Vagina (tissue), 2 donors: ENCODE measurements at regions of chr21 and their contacts with region 1.

Region 1: DNA sequence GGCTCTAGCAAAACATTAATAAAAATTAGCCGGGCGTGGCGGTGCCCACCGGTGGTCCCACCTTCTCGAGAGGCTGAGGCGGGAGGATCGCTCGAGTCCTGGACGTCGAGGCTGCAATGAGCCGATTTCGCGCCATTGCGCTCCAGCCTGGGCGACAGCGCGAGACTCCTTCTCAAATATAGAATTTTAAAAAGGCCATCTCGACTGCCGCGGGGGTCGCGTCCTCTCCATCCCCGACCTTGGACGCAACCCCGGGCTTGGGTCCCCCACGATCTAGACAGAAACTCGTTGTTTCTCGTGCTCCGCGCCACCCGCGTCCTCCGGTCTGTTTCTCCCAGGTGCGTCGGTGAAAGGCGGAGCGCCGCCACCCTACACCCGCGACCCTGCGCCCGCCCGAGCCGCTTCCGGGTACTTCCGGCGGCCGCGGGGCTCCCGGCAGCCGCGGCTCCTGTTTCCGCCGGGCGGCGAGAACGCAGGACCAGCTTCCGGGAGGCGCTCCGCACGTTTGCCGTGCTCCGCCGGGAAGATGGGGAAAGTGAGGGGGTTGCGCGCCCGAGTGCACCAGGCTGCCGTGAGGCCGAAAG is at the start of gene SLX9:
- DNase-seq: no peak
- H3K4me3 ChIP-seq: peak within 1 kb of the TSS; percentile 97 to 98
- H3K27ac ChIP-seq: peak within 1 kb of the TSS; percentile 76
- H3K4me1 ChIP-seq: peaks cover 34% of the 10 kb centered on the region
- H3K27me3 ChIP-seq: no peaks in the 10 kb centered on the region
- CTCF ChIP-seq: no peak
- POLR2A ChIP-seq: no peak
- total RNA-seq, gene SLX9: 8.3 TPM

Region 2: GRCh38 chr21:44801468-44802395 is 137.9 kb before region 1 on chr21 and contains the start of gene UBE2G2:
- intact Hi-C with region 1: loop called (anchors 10 kb)
- DNase-seq: no peak
- H3K4me3 ChIP-seq: peak within 1 kb of the TSS; percentile 81 to 95
- H3K27ac ChIP-seq: peak within 1 kb of the TSS; percentile 71
- H3K4me1 ChIP-seq: peaks cover 26% of the 10 kb centered on the region
- H3K27me3 ChIP-seq: no peaks in the 10 kb centered on the region
- CTCF ChIP-seq: peak in 1 of 3 experiments; percentile 9
- POLR2A ChIP-seq: peak in 1 of 2 donors; percentile 27
- total RNA-seq, gene UBE2G2: 96.5 TPM

Region 3: GRCh38 chr21:45074048-45074817 is 134.6 kb after region 1 on chr21 and contains the start of gene ADARB1:
- intact Hi-C with region 1: loop called (anchors 10 kb)
- DNase-seq: no peak
- H3K4me3 ChIP-seq: peak within 1 kb of the TSS; percentile 89 to 97
- H3K27ac ChIP-seq: peak within 1 kb of the TSS; percentile 94
- H3K4me1 ChIP-seq: peaks cover 29% of the 10 kb centered on the region
- H3K27me3 ChIP-seq: no peaks in the 10 kb centered on the region
- CTCF ChIP-seq: no peak
- POLR2A ChIP-seq: peak in 1 of 2 donors; percentile 79
- total RNA-seq, gene ADARB1: 19.6 TPM

Region 4: DNA sequence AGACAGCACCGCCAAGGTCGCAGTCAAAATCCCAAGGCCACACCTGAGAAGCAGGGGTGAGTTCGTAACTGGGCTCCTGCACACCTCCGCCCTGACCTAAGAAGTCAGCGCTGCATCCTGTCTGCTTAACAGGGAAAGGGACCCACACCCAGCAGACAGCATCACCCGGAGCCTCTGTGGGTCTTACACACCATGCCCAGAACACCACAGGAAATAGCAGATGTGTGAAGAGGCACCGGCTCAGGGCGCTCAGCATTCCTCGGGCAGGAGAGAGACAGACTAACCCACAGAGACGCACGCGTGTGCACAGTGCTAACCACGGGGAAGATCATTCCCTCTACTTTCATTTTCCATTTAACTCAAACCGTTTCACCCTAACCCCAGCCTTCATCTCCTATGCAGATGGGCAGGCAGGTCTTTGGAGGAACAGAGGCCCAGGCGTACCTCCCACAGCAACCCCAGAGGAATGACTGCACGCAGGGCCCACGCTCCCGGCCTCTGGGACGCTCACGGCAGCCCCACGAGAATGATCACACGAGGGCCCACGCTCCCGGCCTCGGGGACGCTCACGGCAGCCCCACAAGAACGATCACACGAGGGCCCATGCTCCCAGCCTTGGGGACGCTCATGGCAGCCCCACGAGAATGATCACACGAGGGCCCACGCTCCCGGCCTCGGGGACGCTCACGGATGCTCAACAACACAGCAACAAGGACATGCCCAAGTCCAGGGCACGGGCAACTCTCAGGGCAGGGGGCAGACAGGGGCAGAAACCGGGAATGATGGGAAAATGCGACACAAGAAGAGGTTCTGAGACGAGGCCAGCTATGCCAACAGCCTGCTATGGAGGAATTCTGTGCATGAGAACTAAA is 327.1 kb after region 1 on chr21:
- intact Hi-C with region 1: loop called (anchors 10 kb)
- DNase-seq: peak in 1 of 2 donors; percentile 78
- H3K4me3 ChIP-seq: no peak overlapping the region
- H3K27ac ChIP-seq: no peak overlapping the region
- H3K4me1 ChIP-seq: peaks cover 4% of the 10 kb centered on the region
- H3K27me3 ChIP-seq: no peaks in the 10 kb centered on the region
- CTCF ChIP-seq: no peak
- POLR2A ChIP-seq: no peak